ENCODE measurements at regions of chrX and their contacts with region 1.

Region 1: GRCh38 chrX:13506574-13506973 is 62.8 kb upstream of the EGFL6 start:
- DNase-seq: peak; percentile 43
- ATAC-seq: no peak

Region 2: GRCh38 chrX:13620207-13620606 is 113.6 kb after region 1 on chrX:
- intact Hi-C with region 1: no loop called
- DNase-seq: no peak
- ATAC-seq: no peak

Region 3: DNA sequence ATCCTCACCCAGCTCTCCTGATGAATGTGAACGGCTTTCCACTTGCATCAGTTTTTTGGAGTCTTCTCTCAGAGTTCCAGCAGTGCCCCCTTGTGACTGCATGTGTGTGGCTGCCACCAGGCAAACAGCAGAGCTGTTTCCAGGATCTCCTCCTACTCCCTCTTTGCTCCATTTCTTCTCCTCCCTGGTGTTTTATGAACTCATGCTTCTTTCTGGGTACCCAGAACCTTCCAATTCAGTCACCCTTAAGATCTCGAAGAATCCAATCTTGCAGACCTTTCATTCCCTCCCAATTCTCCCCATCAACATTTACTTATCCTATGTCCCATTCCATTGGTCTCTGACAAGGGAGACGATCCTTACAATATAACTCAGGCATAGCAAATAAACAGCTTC is 139.6 kb after region 1 on chrX:
- intact Hi-C with region 1: loop called (anchors 2 to 5 kb)
- DNase-seq: peak; percentile 66
- ATAC-seq: peak; percentile 68 to 74

Region 4: DNA sequence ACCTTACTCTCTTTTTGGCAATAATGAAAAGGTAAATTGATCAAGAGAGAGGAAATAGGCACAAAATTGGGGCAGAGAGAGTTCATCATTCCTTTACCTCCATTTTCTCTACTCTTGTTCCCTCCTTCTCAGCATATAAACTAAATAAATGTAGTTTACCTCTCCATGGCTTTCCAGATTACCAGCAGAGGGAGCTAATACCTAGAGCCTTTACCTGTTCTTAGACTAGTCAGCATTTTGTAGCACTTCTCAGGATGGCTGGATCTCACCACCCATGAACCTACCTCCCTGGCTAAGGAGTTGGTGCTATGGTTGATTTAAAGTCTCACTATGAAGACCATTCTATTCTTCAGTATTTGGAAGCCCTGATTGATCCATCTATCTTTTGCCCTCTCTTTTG is 243.6 kb after region 1 on chrX:
- intact Hi-C with region 1: loop called in 1 of 2 experiments (anchors 5 kb)
- DNase-seq: no peak
- ATAC-seq: peak in 1 of 2 donors; percentile 30

Measured in left cardiac atrium (tissue), 4 donors.